ENCODE measurements at regions of chr5 and their contacts with region 1.

Region 1: GRCh38 chr5:168987543-168988300 is 313.2 kb downstream of the SLIT3 start:
- DNase-seq: peak; percentile 63
- H3K4me3 ChIP-seq: no peak overlapping the region
- H3K27ac ChIP-seq: peak overlapping the region in 1 of 2 experiments; percentile 25; a peak in 1 of 4 replicates
- H3K4me1 ChIP-seq: peaks cover 0 to 57% of the 10 kb centered on the region in 2 experiments; a peak in 2 of 4 replicates
- H3K27me3 ChIP-seq: no peaks in the 10 kb centered on the region
- CTCF ChIP-seq: peak; percentile 94
- EP300 ChIP-seq: peak in 1 of 2 experiments; percentile 11; a peak in 1 of 4 replicates
- RAD21 ChIP-seq: peak; percentile 97

Region 2: DNA sequence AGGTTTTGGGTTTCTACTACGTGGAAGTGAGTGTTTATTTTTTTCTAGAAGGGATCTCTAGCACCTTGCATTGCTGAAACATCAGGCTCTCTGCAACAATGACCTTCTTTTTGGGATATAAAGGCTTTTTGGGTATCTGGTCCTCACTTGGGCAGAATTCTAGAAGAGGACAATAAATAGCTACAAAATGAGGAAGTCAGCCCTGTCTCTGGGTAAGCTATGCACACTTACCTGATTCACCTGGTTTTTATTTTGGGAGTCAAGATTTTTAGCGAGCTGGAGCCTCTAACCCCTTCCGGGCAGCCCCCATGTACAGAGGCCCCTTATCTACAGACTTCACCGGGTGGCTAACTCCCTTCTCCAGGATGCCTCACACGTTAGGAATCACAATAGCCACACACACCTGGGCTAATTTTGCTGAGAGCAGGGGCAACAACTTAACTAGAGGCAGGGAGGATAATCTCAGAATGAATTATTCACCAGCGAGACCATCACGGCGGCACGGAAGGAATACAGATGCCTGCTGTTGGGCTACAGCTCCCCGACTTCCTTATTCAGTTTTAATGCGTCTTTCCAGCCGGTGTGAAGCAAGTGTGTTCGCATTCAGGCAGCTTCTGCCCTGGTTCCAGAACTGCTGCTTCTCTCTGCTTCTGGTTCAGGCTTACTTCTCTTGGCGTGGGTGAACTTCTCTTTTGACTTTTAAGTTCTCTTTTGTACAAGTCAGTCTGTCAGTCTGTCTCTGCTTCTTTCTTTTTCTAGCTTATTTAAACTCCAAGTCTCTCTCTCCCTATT is 67.5 kb before region 1 on chr5:
- CTCF ChIA-PET with region 1: no interaction called
- POLR2A ChIA-PET with region 1: no interaction called
- DNase-seq: no peak
- H3K4me3 ChIP-seq: no peak overlapping the region
- H3K27ac ChIP-seq: no peak overlapping the region; a peak in 1 of 4 replicates
- H3K4me1 ChIP-seq: peaks cover 5 to 46% of the 10 kb centered on the region in 2 experiments; a peak in 3 of 4 replicates
- H3K27me3 ChIP-seq: no peaks in the 10 kb centered on the region
- CTCF ChIP-seq: no peak
- EP300 ChIP-seq: no peak
- RAD21 ChIP-seq: no peak

Region 3: GRCh38 chr5:169003721-169004541 is 16.2 kb after region 1 on chr5:
- CTCF ChIA-PET with region 1: interaction called, 26 read pairs
- POLR2A ChIA-PET with region 1: no interaction called
- DNase-seq: peak; percentile 72
- H3K4me3 ChIP-seq: 0 out of 4 replicates have a peak overlapping the region, but pooled peaks of 1 of the 2 experiments have one; percentile 1
- H3K27ac ChIP-seq: peak overlapping the region; percentile 86 to 98
- H3K4me1 ChIP-seq: peaks cover 23 to 53% of the 10 kb centered on the region in 2 experiments
- H3K27me3 ChIP-seq: no peaks in the 10 kb centered on the region
- CTCF ChIP-seq: peak; percentile 57
- EP300 ChIP-seq: peak; percentile 10 to 75; a peak in 1 of 4 replicates
- RAD21 ChIP-seq: peak; percentile 78

Region 4: GRCh38 chr5:169149317-169149716 is 161.6 kb after region 1 on chr5:
- CTCF ChIA-PET with region 1: interaction called, 97 read pairs
- POLR2A ChIA-PET with region 1: interaction called, 3 read pairs
- DNase-seq: peak; percentile 51
- H3K4me3 ChIP-seq: no peak overlapping the region; a peak in 1 of 4 replicates
- H3K27ac ChIP-seq: peak overlapping the region in 1 of 2 experiments; percentile 97; a peak in 3 of 4 replicates
- H3K4me1 ChIP-seq: peaks cover 0 to 76% of the 10 kb centered on the region in 2 experiments; a peak in 2 of 4 replicates
- H3K27me3 ChIP-seq: no peaks in the 10 kb centered on the region
- CTCF ChIP-seq: peak; percentile 57
- EP300 ChIP-seq: peak in 1 of 2 experiments; percentile 58; a peak in 1 of 4 replicates
- RAD21 ChIP-seq: peak; percentile 69

Region 5: GRCh38 chr5:169197343-169197742 is 209.6 kb after region 1 on chr5:
- CTCF ChIA-PET with region 1: interaction called, 16 read pairs
- POLR2A ChIA-PET with region 1: no interaction called
- DNase-seq: no peak
- H3K4me3 ChIP-seq: no peak overlapping the region
- H3K27ac ChIP-seq: no peak overlapping the region; a peak in 1 of 4 replicates
- H3K4me1 ChIP-seq: peaks cover 0 to 2% of the 10 kb centered on the region in 2 experiments; a peak in 1 of 4 replicates
- H3K27me3 ChIP-seq: no peaks in the 10 kb centered on the region
- CTCF ChIP-seq: no peak
- EP300 ChIP-seq: no peak
- RAD21 ChIP-seq: peak; percentile 68

Region 6: DNA sequence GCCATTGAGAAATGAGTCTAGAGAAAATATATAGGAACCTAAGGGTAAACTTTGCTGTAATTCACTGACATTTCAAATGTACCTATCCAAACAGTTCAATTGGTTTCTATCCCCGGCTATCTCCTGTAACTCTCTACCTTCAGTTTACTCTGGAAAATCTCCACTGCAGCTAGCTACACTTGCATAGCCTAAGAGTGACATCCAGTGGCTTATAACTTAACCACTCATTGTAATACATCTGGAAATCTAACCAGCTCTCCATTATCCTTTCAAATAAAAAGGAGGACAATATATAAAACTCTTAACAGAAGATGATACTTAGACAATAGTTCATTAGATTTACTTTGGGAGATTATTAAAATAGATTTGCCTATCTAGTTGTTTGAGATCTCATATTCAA is 560.6 kb after region 1 on chr5:
- CTCF ChIA-PET with region 1: interaction called, 83 read pairs
- POLR2A ChIA-PET with region 1: no interaction called
- DNase-seq: peak; percentile 35
- H3K4me3 ChIP-seq: no peak overlapping the region
- H3K27ac ChIP-seq: peak overlapping the region in 1 of 2 experiments; percentile 81; a peak in 2 of 4 replicates
- H3K4me1 ChIP-seq: peaks cover 0 to 23% of the 10 kb centered on the region in 2 experiments; a peak in 2 of 4 replicates
- H3K27me3 ChIP-seq: no peaks in the 10 kb centered on the region
- CTCF ChIP-seq: peak; percentile 76
- EP300 ChIP-seq: 0 out of 4 replicates have a peak, but pooled peaks of 1 of the 2 experiments have one; percentile 20
- RAD21 ChIP-seq: peak; percentile 99

Region 7: GRCh38 chr5:169583424-169584204 is 595.9 kb after region 1 on chr5 and contains the start of gene SPDL1:
- CTCF ChIA-PET with region 1: interaction called, 12 read pairs
- POLR2A ChIA-PET with region 1: no interaction called
- DNase-seq: peak; percentile 89
- H3K4me3 ChIP-seq: peak within 1 kb of the TSS; percentile 87 to 92
- H3K27ac ChIP-seq: peak within 1 kb of the TSS; percentile 77 to 81
- H3K4me1 ChIP-seq: peaks cover 3 to 21% of the 10 kb centered on the region in 2 experiments; a peak in 3 of 4 replicates
- H3K27me3 ChIP-seq: no peaks in the 10 kb centered on the region
- CTCF ChIP-seq: no peak
- EP300 ChIP-seq: no peak
- RAD21 ChIP-seq: no peak
- polyA plus RNA-seq, gene SPDL1: 45.1 and 63.3 TPM in 2 replicates